ENCODE measurements at regions of chr2 and their contacts with region 1.

Region 1: GRCh38 chr2:223957092-223957851 is at the start of gene MRPL44:
- DNase-seq: peak; percentile 98
- ATAC-seq: peak; percentile 98
- H3K4me3 Mint-ChIP-seq: peak within 1 kb of the TSS; percentile 95
- H3K27ac Mint-ChIP-seq: peak within 1 kb of the TSS; percentile 94
- H3K4me1 Mint-ChIP-seq: peaks cover 75% of the 10 kb centered on the region
- H3K27me3 Mint-ChIP-seq: no peaks in the 10 kb centered on the region
- CTCF ChIP-seq: no peak
- total RNA-seq, gene MRPL44: 29.9 and 30.4 TPM in 2 replicates

Region 2: GRCh38 chr2:222548992-222549391 is 1408.3 kb before region 1 on chr2:
- CTCF ChIA-PET with region 1: no interaction called
- POLR2A ChIA-PET with region 1: no interaction called
- intact Hi-C with region 1: no loop called
- DNase-seq: no peak
- ATAC-seq: no peak
- H3K4me3 Mint-ChIP-seq: no peak overlapping the region
- H3K27ac Mint-ChIP-seq: no peak overlapping the region
- H3K4me1 Mint-ChIP-seq: no peaks in the 10 kb centered on the region
- H3K27me3 Mint-ChIP-seq: peaks cover 3% of the 10 kb centered on the region
- CTCF ChIP-seq: no peak

Region 3: GRCh38 chr2:222860740-222861410 is 1096.4 kb before region 1 on chr2 and contains the start of gene ACSL3:
- CTCF ChIA-PET with region 1: no interaction called
- POLR2A ChIA-PET with region 1: no interaction called
- intact Hi-C with region 1: loop called (anchors 2 kb)
- DNase-seq: peak; percentile 90
- ATAC-seq: peak; percentile 97
- H3K4me3 Mint-ChIP-seq: peak within 1 kb of the TSS; percentile 81
- H3K27ac Mint-ChIP-seq: peak within 1 kb of the TSS; percentile 87
- H3K4me1 Mint-ChIP-seq: peaks cover 7% of the 10 kb centered on the region
- H3K27me3 Mint-ChIP-seq: no peaks in the 10 kb centered on the region
- CTCF ChIP-seq: no peak
- total RNA-seq, gene ACSL3: 40.6 and 41.2 TPM in 2 replicates

Region 4: DNA sequence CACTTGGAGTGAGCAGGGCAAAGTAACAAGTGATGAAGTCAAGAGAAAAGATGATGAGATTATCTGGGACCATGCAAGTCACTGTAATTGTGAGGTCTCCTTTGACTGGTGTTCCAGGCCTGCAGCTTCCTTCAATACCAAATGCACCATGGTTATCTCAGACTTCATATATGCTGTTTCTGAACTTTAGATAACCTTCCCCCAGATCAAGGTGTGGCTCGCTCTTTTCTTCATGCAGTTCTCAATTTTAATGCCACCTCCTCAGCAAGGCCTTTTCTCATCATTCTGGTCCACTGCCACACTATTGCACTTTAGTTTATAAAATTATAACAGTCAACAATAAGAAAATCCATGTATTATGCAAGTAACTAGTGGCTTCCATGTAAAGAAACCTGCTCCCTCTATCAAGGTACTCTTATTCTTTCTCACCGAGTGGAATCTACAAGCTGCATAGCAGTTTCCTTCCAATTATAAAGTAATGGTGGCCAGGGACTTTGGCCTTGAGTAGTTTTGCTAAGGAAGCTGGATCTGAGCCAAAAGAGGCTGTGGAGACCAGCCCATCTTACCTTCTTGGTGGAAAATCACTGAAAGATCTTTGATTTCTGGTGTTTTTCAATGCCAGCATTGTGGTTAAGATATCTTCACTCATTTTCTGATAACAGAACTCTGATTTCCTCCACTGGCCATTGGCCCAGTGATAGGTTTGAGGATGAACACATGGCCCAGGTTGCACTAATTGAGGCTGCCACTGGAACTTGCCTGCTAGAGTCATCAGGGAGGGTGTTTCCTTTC is 791.7 kb before region 1 on chr2:
- CTCF ChIA-PET with region 1: no interaction called
- POLR2A ChIA-PET with region 1: no interaction called
- intact Hi-C with region 1: no loop called
- DNase-seq: no peak
- ATAC-seq: no peak
- H3K4me3 Mint-ChIP-seq: no peak overlapping the region
- H3K27ac Mint-ChIP-seq: no peak overlapping the region
- H3K4me1 Mint-ChIP-seq: no peaks in the 10 kb centered on the region
- H3K27me3 Mint-ChIP-seq: no peaks in the 10 kb centered on the region
- CTCF ChIP-seq: no peak

Region 5: GRCh38 chr2:223779877-223780276 is 177.4 kb before region 1 on chr2:
- CTCF ChIA-PET with region 1: no interaction called
- POLR2A ChIA-PET with region 1: no interaction called
- intact Hi-C with region 1: loop called (anchors 5 kb)
- DNase-seq: peak; percentile 21
- ATAC-seq: peak; percentile 90
- H3K4me3 Mint-ChIP-seq: no peak overlapping the region
- H3K27ac Mint-ChIP-seq: peak overlapping the region; percentile 41
- H3K4me1 Mint-ChIP-seq: peaks cover 21% of the 10 kb centered on the region
- H3K27me3 Mint-ChIP-seq: no peaks in the 10 kb centered on the region
- CTCF ChIP-seq: no peak

Region 6: DNA sequence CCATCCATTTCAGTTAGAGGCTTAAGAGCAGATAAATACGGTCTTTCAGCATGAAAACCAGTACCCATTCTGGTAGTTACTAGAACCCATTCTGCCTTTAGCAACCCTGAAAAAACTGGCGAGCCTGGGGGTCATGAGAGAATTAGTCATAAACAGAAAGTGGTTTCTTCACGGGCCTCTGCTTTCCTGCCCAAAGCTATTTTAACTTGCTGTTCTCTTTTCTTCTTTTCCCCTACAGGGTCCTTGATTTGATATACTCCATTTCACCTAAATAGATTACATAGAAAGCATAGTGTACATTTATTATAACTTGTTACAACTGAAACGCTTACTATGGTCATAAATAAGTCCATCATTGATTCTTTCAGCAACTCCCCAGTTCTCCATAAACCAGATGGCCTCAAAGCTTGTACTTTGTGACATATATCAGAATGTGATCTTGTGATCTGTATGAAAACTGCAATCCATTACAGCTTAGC is 60.4 kb before region 1 on chr2:
- CTCF ChIA-PET with region 1: interaction called, 3 read pairs
- POLR2A ChIA-PET with region 1: interaction called, 12 read pairs
- intact Hi-C with region 1: loop called (anchors 1 kb)
- DNase-seq: peak; percentile 22
- ATAC-seq: peak; percentile 45
- H3K4me3 Mint-ChIP-seq: peak overlapping the region; percentile 67
- H3K27ac Mint-ChIP-seq: peak overlapping the region; percentile 99
- H3K4me1 Mint-ChIP-seq: peaks cover 74% of the 10 kb centered on the region
- H3K27me3 Mint-ChIP-seq: no peaks in the 10 kb centered on the region
- CTCF ChIP-seq: no peak

Region 7: GRCh38 chr2:224025874-224026273 is 68.6 kb after region 1 on chr2:
- CTCF ChIA-PET with region 1: no interaction called
- POLR2A ChIA-PET with region 1: interaction called, 3 read pairs
- intact Hi-C with region 1: loop called (anchors 1 kb)
- DNase-seq: peak; percentile 27
- ATAC-seq: peak; percentile 99
- H3K4me3 Mint-ChIP-seq: peak overlapping the region; percentile 53
- H3K27ac Mint-ChIP-seq: peak overlapping the region; percentile 79
- H3K4me1 Mint-ChIP-seq: peaks cover 49% of the 10 kb centered on the region
- H3K27me3 Mint-ChIP-seq: no peaks in the 10 kb centered on the region
- CTCF ChIP-seq: no peak

Region 8: DNA sequence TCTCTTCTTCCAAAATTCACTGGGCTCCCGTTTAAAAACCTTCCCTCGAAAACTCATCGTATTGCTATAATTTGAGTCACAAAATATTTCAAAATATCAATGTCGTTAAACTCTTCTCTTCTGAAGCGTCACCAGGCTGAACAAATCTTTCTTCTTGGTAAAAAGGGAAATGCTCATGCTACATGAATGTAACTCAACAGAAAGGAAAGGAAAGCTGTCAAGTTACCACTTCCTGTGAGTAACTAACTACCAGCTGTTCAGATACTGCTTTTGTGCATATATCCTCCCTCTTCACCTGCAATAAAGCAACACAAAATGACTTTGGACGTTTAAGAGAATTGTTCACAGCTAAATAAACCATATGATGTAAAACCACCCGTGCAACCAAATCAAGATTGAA is 989.6 kb after region 1 on chr2:
- CTCF ChIA-PET with region 1: no interaction called
- POLR2A ChIA-PET with region 1: no interaction called
- intact Hi-C with region 1: loop called (anchors 10 kb)
- DNase-seq: no peak
- ATAC-seq: peak; percentile 65
- H3K4me3 Mint-ChIP-seq: peak overlapping the region; percentile 90
- H3K27ac Mint-ChIP-seq: peak overlapping the region; percentile 92
- H3K4me1 Mint-ChIP-seq: peaks cover 87% of the 10 kb centered on the region
- H3K27me3 Mint-ChIP-seq: no peaks in the 10 kb centered on the region
- CTCF ChIP-seq: no peak

Measured in activated B cell treated with CpG ODN at 0.5 μM for 24 hours (primary cell).